CD8-positive, alpha-beta T cell (primary cell): ENCODE measurements at regions of chr3 and their contacts with region 1.

Region 1: DNA sequence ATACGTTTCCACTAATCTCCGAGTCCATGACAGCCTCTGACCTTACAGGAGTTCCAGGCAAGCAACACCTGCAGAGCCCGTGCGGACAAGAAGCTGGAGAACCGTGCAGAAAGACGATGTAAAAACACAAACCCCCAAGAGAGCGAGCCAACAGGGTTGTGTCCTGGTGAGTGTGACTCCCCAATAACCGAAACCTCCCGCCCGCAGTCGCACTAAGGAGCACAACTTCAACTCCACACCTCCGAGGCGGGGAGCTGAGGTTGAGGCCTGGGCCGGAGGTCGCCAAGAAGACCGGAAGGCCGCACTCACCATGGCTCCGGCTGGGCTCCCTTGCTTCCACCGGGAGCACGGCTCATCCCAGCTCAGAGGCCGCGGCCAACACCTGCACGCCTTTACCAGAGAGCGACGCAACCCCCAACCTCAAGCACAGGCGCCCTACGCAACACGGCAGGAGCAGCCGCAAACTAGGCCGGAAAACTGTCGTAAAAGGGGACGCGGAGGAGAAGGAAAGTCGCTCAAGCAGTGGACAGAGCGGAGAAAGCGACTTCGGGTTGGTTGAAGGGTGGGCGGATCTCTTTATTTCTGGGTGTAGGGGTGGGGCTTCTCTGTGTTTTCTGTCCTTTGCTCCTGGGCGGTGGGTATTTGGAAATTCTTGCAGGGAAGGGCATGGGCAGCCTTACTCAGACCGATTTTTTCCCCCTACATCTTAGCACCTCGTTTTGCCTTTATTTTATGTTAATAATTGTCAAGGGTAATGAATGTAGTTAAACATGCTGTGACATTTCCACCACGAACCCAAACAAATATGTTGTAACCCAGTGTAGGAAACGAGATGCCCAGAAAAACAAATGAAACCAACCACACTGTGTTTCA is at the start of gene DNAJC19:
- DNase-seq: peak; percentile 82 to 97 (median 90)
- ATAC-seq: peak; percentile 95
- H3K4me3 ChIP-seq: peak within 1 kb of the TSS; percentile 74 to 93
- H3K4me3 Mint-ChIP-seq: peak within 1 kb of the TSS; percentile 97
- H3K27ac ChIP-seq: peak within 1 kb of the TSS; percentile 74
- H3K27ac Mint-ChIP-seq: peak within 1 kb of the TSS; percentile 97
- H3K4me1 ChIP-seq: peaks cover 11% of the 10 kb centered on the region
- H3K4me1 Mint-ChIP-seq: peaks cover 51% of the 10 kb centered on the region
- H3K27me3 ChIP-seq: no peaks in the 10 kb centered on the region
- H3K27me3 Mint-ChIP-seq: peaks cover 3% of the 10 kb centered on the region
- CTCF ChIP-seq: no peak
- total RNA-seq, gene DNAJC19: 35.5 to 42.3 TPM

Region 2: DNA sequence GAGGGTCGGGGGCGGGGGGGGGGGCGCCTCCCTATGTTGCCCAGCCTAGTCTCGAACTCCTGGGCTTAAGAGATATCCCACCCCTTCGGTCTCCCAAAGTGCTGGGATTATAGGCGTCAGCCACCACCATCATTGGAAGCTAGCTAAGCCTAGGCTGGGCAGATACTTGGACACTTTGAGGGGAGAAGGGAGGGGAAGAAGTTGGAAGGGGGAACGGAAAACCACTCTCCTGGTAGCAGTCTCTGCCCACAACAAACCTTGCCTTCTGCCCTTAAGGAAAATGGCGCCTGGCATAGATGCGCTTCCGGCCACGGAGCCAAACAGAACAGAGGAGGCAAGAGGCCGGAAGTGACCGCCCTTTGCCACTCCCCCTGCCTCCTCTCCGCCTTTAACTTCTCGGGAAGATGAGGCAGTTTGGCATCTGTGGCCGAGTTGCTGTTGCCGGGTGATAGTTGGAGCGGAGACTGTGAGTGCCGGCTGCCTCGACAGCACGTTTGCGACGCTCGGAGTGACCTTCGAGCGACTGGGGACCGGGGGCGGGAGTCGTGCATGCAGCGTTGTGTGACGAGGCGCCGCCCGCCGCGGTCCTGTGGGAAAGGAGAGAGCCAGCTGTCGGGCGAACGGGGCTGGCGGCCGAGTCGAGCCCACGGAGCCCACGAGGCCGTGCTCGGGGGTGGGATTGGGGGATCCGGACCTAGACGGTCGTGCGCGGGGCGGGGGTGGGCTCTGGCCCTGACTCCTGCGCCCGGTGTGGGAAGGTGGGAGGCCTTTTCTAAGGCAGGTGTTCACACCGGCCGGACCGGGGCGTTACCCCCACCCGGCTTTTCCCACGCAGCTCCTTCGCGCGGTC is 1642.0 kb before region 1 on chr3 and contains the start of gene MFN1:
- CTCF ChIA-PET with region 1: no interaction called
- POLR2A ChIA-PET with region 1: no interaction called
- intact Hi-C with region 1: loop called in 1 of 2 experiments (anchors 10 kb)
- DNase-seq: peak; percentile 72 to 95 (median 88)
- ATAC-seq: peak; percentile 97
- H3K4me3 ChIP-seq: peak within 1 kb of the TSS; percentile 89 to 94
- H3K4me3 Mint-ChIP-seq: peak within 1 kb of the TSS; percentile 100
- H3K27ac ChIP-seq: peak within 1 kb of the TSS; percentile 68 to 77
- H3K27ac Mint-ChIP-seq: peak within 1 kb of the TSS; percentile 99
- H3K4me1 ChIP-seq: peaks cover 6% of the 10 kb centered on the region
- H3K4me1 Mint-ChIP-seq: peaks cover 35% of the 10 kb centered on the region
- H3K27me3 ChIP-seq: no peaks in the 10 kb centered on the region
- H3K27me3 Mint-ChIP-seq: no peaks in the 10 kb centered on the region
- CTCF ChIP-seq: no peak
- total RNA-seq, gene MFN1: 21.9 to 26.7 TPM

Region 3: DNA sequence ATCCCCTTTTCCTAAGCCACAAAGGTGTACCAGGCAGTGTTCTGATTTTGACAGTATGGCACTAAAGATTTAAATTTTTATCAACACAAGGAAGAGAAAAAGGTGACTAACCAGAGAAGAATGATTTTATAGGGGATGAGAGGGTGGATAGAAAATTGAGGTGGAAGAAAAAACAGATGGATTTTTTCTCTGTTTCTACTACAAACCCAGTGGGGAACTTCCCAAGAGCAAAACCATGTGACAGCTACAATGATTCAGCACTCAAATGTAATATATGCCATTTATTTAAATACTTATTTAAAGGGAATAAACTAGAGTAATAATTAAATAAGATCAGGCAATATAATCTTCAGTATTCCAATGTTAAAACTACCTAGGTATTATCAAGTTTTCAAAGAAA is 1979.8 kb after region 1 on chr3:
- CTCF ChIA-PET with region 1: no interaction called
- POLR2A ChIA-PET with region 1: no interaction called
- intact Hi-C with region 1: loop called in 1 of 2 experiments (anchors 5 kb)
- DNase-seq: no peak
- ATAC-seq: no peak
- H3K4me3 ChIP-seq: no peak overlapping the region
- H3K4me3 Mint-ChIP-seq: no peak overlapping the region
- H3K27ac ChIP-seq: no peak overlapping the region
- H3K27ac Mint-ChIP-seq: no peak overlapping the region
- H3K4me1 ChIP-seq: peaks cover 22% of the 10 kb centered on the region
- H3K4me1 Mint-ChIP-seq: peaks cover 64% of the 10 kb centered on the region
- H3K27me3 ChIP-seq: no peaks in the 10 kb centered on the region
- H3K27me3 Mint-ChIP-seq: no peaks in the 10 kb centered on the region
- CTCF ChIP-seq: no peak